Activated naive CD4-positive, alpha-beta T cell treated with anti-CD3 and anti-CD28 coated beads for 36 hours (primary cell): ENCODE measurements at regions of chr15 and their contacts with region 1.

Region 1: DNA sequence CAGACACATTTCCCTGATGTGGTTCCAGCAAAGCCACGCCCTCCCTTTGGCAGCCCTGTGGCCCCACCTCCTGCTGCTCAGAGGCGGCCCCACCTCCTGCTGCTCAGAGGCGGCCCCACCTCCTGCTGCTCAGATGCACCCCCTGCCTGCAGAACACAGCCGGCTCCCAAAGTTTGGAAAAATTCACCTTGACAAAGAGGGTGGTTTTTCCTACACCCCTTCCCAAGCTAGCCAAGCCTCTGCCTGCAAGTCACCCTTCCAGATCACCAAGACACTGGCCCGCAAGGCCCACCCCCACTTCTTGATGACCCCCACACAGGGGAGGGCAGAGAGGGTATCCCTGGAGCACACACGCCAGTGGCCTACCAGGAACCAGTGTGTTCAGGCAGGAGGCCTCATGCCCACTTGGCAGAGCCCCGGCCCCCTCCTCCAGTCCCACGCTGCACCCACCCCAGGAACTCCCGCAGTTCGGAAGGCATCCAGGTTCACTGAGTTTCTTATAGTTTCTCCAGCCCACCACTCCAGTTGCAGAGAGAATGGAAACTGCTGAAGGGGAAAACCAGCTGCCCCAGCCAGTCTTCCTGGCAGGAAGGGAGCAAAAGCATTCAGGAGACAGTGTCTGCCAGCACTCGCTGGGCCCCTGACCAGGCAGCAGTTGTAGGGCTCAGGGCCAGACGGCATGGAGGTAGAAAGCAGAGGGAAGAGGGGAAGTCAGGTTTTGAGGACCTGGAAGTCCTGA is 2.3 kb upstream of the HAPLN3 start:
- DNase-seq: peak; percentile 84
- H3K4me3 Mint-ChIP-seq: no peak overlapping the region
- H3K27ac Mint-ChIP-seq: no peak overlapping the region
- H3K4me1 Mint-ChIP-seq: peaks cover 43% of the 10 kb centered on the region
- H3K27me3 Mint-ChIP-seq: no peaks in the 10 kb centered on the region

Region 2: GRCh38 chr15:88546248-88547129 is 351.1 kb before region 1 on chr15 and contains the start of gene DET1:
- CTCF ChIA-PET with region 1: no interaction called
- intact Hi-C with region 1: loop called (anchors 1 kb)
- DNase-seq: peak; percentile 98
- H3K4me3 Mint-ChIP-seq: peak within 1 kb of the TSS; percentile 90
- H3K27ac Mint-ChIP-seq: peak within 1 kb of the TSS; percentile 90
- H3K4me1 Mint-ChIP-seq: peaks cover 15% of the 10 kb centered on the region
- H3K27me3 Mint-ChIP-seq: no peaks in the 10 kb centered on the region
- total RNA-seq, gene DET1: 2.0 to 2.9 TPM

Region 3: GRCh38 chr15:88725305-88726210 is 172.1 kb before region 1 on chr15:
- CTCF ChIA-PET with region 1: no interaction called
- intact Hi-C with region 1: no loop called
- DNase-seq: no peak
- H3K4me3 Mint-ChIP-seq: no peak overlapping the region
- H3K27ac Mint-ChIP-seq: no peak overlapping the region
- H3K4me1 Mint-ChIP-seq: no peaks in the 10 kb centered on the region
- H3K27me3 Mint-ChIP-seq: peaks cover 6% of the 10 kb centered on the region

Region 4: GRCh38 chr15:89017370-89018066 is 119.9 kb after region 1 on chr15:
- CTCF ChIA-PET with region 1: interaction called, 4 read pairs
- intact Hi-C with region 1: loop called (anchors 1 kb)
- DNase-seq: peak; percentile 93
- H3K4me3 Mint-ChIP-seq: peak overlapping the region; percentile 43
- H3K27ac Mint-ChIP-seq: no peak overlapping the region
- H3K4me1 Mint-ChIP-seq: peaks cover 12% of the 10 kb centered on the region
- H3K27me3 Mint-ChIP-seq: peaks cover 3% of the 10 kb centered on the region

Region 5: GRCh38 chr15:89243691-89244471 is 346.3 kb after region 1 on chr15 and contains the start of gene FANCI:
- CTCF ChIA-PET with region 1: no interaction called
- intact Hi-C with region 1: loop called (anchors 2 kb)
- DNase-seq: peak; percentile 99
- H3K4me3 Mint-ChIP-seq: peak within 1 kb of the TSS; percentile 98
- H3K27ac Mint-ChIP-seq: peak within 1 kb of the TSS; percentile 93
- H3K4me1 Mint-ChIP-seq: peaks cover 31% of the 10 kb centered on the region
- H3K27me3 Mint-ChIP-seq: no peaks in the 10 kb centered on the region
- total RNA-seq, gene FANCI: 268 to 283 TPM

Region 6: DNA sequence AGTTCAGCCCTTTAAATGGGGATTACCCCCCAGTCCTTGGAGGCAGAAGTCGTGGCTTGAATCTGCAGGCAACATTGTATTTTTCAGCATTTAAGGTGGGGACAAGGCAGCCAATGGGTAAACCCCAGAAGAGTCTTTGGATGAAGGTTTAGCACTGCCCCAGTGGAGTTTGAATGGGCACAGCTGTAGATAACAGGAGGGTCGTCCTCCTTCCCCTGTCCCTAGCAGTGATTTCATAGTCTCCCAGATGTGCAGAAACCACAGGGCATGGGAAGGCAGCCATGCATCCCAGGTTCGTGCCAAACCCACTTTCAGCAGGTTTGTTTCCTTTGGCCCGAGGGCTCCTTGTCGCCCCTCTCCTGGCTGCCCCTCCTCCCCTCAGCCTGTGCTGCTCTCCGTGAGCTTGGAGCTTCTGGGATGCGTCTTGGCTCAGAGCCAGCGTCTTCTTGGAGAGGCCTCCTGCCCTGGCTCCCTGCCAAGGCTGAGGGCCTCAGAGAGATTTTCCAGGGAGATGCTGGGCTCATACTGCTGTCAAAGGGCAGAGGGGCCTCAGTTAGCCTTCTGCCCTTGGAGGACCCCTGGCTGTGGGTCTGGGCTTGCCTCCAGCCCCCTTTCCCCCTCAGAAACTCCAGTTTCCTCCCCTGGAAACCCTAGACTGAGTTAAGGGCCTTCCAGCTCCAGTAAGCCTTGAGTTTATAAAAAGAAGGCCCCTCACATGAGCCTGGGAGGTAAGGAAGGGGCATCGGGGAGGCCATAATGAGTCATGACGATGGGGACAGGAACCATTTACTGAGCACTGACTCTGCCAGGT is 485.9 kb after region 1 on chr15:
- CTCF ChIA-PET with region 1: no interaction called
- intact Hi-C with region 1: no loop called
- DNase-seq: no peak
- H3K4me3 Mint-ChIP-seq: no peak overlapping the region
- H3K27ac Mint-ChIP-seq: no peak overlapping the region
- H3K4me1 Mint-ChIP-seq: no peaks in the 10 kb centered on the region
- H3K27me3 Mint-ChIP-seq: peaks cover 17% of the 10 kb centered on the region